Caco-2 (cell line): ENCODE measurements at regions of chr2 and their contacts with region 1.

Region 1: DNA sequence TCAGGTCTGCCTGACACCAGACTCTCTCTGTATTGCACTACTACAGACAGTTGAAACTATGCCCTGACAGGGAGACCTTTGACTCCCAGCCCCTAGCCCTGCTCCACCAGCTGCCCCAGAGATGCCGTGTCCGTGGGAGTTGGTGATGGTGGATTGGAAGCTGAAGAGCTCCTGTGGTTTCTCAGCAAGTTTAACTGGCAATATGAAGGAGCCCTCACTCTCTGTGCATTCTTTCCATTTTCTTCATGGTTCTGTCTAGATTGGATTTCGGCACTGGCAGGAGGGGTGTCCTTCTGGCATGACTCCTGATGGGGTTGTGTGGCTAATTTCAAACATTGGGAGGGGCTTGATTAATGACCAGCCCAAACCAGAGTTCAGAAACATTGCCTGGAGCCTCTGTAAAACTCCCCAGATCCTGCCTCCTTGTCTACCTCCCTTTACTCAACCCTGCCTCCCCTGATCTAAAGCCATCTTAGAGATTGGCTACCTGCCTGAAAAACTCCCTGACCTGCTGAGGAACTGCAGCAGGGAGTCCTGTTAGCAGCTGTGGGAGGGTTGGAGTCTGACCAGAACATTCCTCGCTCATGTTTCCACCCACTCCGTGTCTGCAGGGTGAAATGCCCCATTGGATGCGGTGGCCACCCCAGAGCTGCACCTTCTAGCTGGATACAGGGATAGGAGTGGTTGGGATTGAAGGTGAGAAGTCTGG is 206.9 kb upstream of the SPRED2 start:
- DNase-seq: no peak
- H3K4me3 ChIP-seq: no peak overlapping the region
- H3K4me3 Mint-ChIP-seq: no peak overlapping the region
- H3K27ac Mint-ChIP-seq: no peak overlapping the region
- H3K4me1 ChIP-seq: no peaks in the 10 kb centered on the region
- H3K4me1 Mint-ChIP-seq: no peaks in the 10 kb centered on the region
- H3K27me3 ChIP-seq: no peaks in the 10 kb centered on the region
- H3K27me3 Mint-ChIP-seq: peaks cover 9% of the 10 kb centered on the region
- CTCF ChIP-seq: no peak

Region 2: DNA sequence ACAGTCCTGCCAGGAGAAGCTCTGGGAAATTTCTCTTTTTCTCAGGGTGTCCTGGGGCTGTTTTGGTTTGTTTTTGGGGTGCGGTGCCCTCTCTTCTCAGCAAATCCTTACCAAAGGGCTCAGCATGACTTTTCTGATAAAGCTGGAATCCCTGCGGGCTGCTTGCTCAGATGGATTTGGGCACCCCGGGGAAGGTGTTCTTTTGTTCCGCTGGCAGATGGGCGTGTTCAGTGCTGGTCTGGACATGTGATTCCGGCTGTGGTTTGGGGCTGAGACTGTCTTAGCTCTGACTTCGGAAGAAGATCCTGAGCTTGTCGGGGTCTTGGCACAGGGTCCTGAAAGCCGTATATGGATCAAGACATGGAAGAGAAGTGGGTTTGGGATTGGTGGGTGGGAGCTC is 72.7 kb before region 1 on chr2:
- CTCF ChIA-PET with region 1: no interaction called
- POLR2A ChIA-PET with region 1: no interaction called
- intact Hi-C with region 1: no loop called
- DNase-seq: no peak
- H3K4me3 ChIP-seq: no peak overlapping the region
- H3K4me3 Mint-ChIP-seq: no peak overlapping the region
- H3K27ac Mint-ChIP-seq: no peak overlapping the region
- H3K4me1 ChIP-seq: no peaks in the 10 kb centered on the region
- H3K4me1 Mint-ChIP-seq: no peaks in the 10 kb centered on the region
- H3K27me3 ChIP-seq: no peaks in the 10 kb centered on the region
- H3K27me3 Mint-ChIP-seq: no peaks in the 10 kb centered on the region
- CTCF ChIP-seq: no peak

Region 3: GRCh38 chr2:65691857-65692256 is 52.5 kb after region 1 on chr2:
- CTCF ChIA-PET with region 1: no interaction called
- POLR2A ChIA-PET with region 1: no interaction called
- intact Hi-C with region 1: loop called (anchors 2 kb)
- DNase-seq: no peak
- H3K4me3 ChIP-seq: no peak overlapping the region
- H3K4me3 Mint-ChIP-seq: no peak overlapping the region
- H3K27ac Mint-ChIP-seq: no peak overlapping the region
- H3K4me1 ChIP-seq: no peaks in the 10 kb centered on the region
- H3K4me1 Mint-ChIP-seq: no peaks in the 10 kb centered on the region
- H3K27me3 ChIP-seq: no peaks in the 10 kb centered on the region; the same call in 1 of the 2 replicates
- H3K27me3 Mint-ChIP-seq: peaks cover 21% of the 10 kb centered on the region
- CTCF ChIP-seq: no peak

Region 4: DNA sequence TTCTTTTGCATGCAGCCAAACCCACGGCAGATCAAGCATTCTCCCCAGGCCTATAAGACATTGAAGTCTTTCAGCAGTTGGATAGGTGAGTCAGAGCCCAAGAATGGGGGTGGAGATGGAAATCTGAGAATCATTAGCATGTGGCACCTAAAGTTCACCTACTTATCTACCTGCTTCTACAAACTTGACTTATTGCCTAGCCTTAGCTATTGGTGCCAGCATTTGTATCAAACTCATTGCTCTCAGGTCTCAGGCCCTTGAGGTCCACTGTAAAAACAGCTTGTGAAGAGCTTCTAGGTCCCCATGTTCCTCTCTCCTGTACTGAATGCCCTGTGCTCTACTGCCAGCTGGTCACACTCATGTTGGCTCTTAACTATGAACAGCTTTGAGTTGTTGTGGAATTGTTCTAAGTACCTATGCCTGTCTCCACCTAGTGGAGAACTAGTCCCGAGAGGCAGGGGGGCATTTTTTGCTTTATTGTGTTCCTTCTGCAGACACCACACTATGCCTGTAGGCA is 71.5 kb after region 1 on chr2:
- CTCF ChIA-PET with region 1: interaction called, 15 read pairs
- POLR2A ChIA-PET with region 1: no interaction called
- intact Hi-C with region 1: loop called (anchors 1 kb)
- DNase-seq: peak in 1 of 2 experiments; percentile 16
- H3K4me3 ChIP-seq: no peak overlapping the region
- H3K4me3 Mint-ChIP-seq: no peak overlapping the region
- H3K27ac Mint-ChIP-seq: no peak overlapping the region
- H3K4me1 ChIP-seq: no peaks in the 10 kb centered on the region
- H3K4me1 Mint-ChIP-seq: no peaks in the 10 kb centered on the region
- H3K27me3 ChIP-seq: no peaks in the 10 kb centered on the region
- H3K27me3 Mint-ChIP-seq: peaks cover 17% of the 10 kb centered on the region
- CTCF ChIP-seq: peak; percentile 33 to 40

Region 5: GRCh38 chr2:65800998-65801397 is 161.7 kb after region 1 on chr2:
- CTCF ChIA-PET with region 1: no interaction called
- POLR2A ChIA-PET with region 1: no interaction called
- intact Hi-C with region 1: loop called (anchors 1 kb)
- DNase-seq: peak in 1 of 2 experiments; percentile 9
- H3K4me3 ChIP-seq: no peak overlapping the region
- H3K4me3 Mint-ChIP-seq: no peak overlapping the region
- H3K27ac Mint-ChIP-seq: no peak overlapping the region
- H3K4me1 ChIP-seq: no peaks in the 10 kb centered on the region
- H3K4me1 Mint-ChIP-seq: no peaks in the 10 kb centered on the region
- H3K27me3 ChIP-seq: no peaks in the 10 kb centered on the region; the same call in 1 of the 2 replicates
- H3K27me3 Mint-ChIP-seq: peaks cover 18% of the 10 kb centered on the region
- CTCF ChIP-seq: peak; percentile 12 to 31